A549 (cell line): ENCODE measurements at regions of chr16 and their contacts with region 1.

Region 1: GRCh38 chr16:56317998-56318826 is 107.1 kb downstream of the AMFR start:
- DNase-seq: peak; percentile 66 to 92
- ATAC-seq: peak; percentile 93 to 99
- H3K4me3 ChIP-seq: no peak overlapping the region
- H3K27ac ChIP-seq: peak overlapping the region in 1 of 2 experiments; percentile 64; a peak in 2 of 6 replicates
- H3K4me1 ChIP-seq: 0 out of 3 replicates have a peak, but pooled peaks cover 3% of the 10 kb centered on the region
- CTCF ChIP-seq: peak; percentile 82
- EP300 ChIP-seq: no peak
- POLR2A ChIP-seq: no peak
- RAD21 ChIP-seq: peak; percentile 92 to 93

Region 2: DNA sequence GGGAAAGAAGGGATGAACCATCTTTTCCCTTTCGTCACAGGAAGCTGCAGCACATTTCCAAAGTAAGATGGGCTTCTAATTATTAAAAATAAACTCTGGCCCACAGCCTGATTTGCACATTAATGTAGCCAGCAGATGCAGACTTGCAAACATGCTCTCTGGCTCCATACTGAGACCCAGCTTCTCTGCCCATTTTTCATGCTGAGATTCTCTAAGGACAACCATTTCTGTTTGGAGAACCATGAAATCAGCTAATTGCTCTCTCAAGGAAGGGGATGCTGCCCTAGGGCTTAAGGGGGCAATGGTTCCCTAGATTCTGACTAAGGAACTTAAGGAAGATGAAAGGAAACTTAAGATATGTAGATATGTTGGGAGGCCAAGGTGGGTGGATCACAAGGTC is 380.1 kb before region 1 on chr16:
- CTCF ChIA-PET with region 1: interaction called, 101 read pairs
- POLR2A ChIA-PET with region 1: no interaction called
- DNase-seq: no peak
- ATAC-seq: no peak
- H3K4me3 ChIP-seq: no peak overlapping the region
- H3K27ac ChIP-seq: no peak overlapping the region
- H3K4me1 ChIP-seq: no peaks in the 10 kb centered on the region
- CTCF ChIP-seq: no peak
- EP300 ChIP-seq: no peak
- POLR2A ChIP-seq: no peak
- RAD21 ChIP-seq: no peak

Region 3: GRCh38 chr16:56041686-56042085 is 276.5 kb before region 1 on chr16:
- CTCF ChIA-PET with region 1: interaction called, 13 read pairs
- POLR2A ChIA-PET with region 1: no interaction called
- DNase-seq: peak; percentile 6 to 36
- ATAC-seq: peak; percentile 77 to 88
- H3K4me3 ChIP-seq: no peak overlapping the region
- H3K27ac ChIP-seq: no peak overlapping the region
- H3K4me1 ChIP-seq: no peaks in the 10 kb centered on the region
- CTCF ChIP-seq: no peak
- EP300 ChIP-seq: no peak
- POLR2A ChIP-seq: no peak
- RAD21 ChIP-seq: peak in 1 of 2 experiments; percentile 50; a peak in 2 of 5 replicates

Region 4: DNA sequence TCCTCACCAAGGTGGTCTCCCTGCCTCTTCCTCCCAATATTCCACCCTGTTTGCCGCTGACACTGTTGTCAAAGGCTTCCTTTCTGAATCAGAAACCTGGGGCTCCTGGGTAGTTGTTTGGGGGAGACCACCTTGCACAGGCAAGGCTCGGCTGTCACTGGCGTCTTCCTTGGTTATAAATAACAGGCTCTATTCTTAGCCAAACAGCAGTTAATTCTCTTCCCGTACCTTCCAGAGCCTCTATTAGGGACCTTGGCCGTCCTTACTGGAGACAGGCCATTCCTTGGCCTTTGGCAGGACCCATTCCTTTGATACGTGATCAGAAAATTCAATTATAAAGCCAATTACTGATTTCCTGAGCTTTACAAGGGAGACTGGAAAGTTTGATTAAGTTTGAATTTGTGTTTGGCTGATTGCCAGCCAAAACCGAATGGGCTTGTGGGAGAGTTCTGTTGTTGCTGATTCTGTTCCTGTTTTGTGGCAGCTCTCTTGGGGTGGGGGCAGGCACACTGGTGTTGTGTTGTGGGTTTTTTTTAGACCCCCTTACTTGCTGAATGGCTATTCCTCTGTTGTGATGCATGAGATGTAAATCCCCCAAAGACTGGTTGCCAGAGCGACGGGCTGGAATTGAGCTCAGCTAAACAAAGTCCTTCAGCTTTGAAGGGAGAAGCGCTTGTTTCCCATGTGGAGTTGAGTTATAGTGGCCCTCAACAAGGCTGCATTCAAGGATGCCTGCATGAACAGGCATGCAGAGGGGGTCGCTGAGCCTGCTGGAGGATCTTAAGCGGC is 22.3 kb before region 1 on chr16:
- CTCF ChIA-PET with region 1: interaction called, 17 read pairs
- POLR2A ChIA-PET with region 1: no interaction called
- DNase-seq: no peak
- ATAC-seq: no peak
- H3K4me3 ChIP-seq: no peak overlapping the region
- H3K27ac ChIP-seq: no peak overlapping the region
- H3K4me1 ChIP-seq: no peaks in the 10 kb centered on the region
- CTCF ChIP-seq: no peak
- EP300 ChIP-seq: no peak
- POLR2A ChIP-seq: no peak
- RAD21 ChIP-seq: no peak

Region 5: DNA sequence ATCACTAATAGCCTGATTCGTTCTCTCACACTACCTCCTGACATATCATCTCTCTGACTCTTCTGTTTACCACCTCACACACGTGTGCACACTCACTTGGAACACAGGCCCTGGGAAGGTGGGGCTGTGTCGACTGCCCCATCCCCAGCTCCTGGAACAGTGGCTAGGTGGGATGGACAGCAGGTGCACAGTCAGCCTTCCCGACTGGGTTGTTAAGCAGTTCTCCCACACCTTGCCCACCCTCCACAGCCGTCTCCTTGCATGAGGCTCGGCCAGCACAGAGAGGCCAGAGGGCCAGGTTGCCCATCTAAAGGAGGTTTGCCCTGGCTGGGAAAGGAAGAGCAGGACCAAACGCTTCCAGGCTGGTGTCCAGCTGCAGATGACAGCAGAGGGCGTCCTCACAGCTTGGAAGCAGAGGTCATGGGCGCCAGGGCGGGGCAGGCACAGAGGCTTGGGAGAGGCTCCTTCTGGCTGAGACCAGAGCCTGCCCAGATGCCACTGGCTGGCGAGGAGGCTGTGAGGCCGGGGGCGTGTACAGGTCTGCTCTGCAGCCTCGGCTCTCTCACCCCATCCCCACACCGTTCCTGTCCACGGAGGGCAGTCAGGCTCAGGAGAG is 14.4 kb after region 1 on chr16:
- CTCF ChIA-PET with region 1: interaction called, 109 read pairs
- POLR2A ChIA-PET with region 1: no interaction called
- DNase-seq: peak; percentile 79 to 86
- ATAC-seq: peak; percentile 93 to 98
- H3K4me3 ChIP-seq: no peak overlapping the region
- H3K27ac ChIP-seq: peak overlapping the region; percentile 43 to 55; a peak in 2 of 6 replicates
- H3K4me1 ChIP-seq: peaks cover 4% of the 10 kb centered on the region; the same call in 2 of the 3 replicates
- CTCF ChIP-seq: peak; percentile 74
- EP300 ChIP-seq: no peak
- POLR2A ChIP-seq: no peak
- RAD21 ChIP-seq: peak; percentile 77 to 79